ENCODE measurements at regions of chr1 and their contacts with region 1.

Region 1: DNA sequence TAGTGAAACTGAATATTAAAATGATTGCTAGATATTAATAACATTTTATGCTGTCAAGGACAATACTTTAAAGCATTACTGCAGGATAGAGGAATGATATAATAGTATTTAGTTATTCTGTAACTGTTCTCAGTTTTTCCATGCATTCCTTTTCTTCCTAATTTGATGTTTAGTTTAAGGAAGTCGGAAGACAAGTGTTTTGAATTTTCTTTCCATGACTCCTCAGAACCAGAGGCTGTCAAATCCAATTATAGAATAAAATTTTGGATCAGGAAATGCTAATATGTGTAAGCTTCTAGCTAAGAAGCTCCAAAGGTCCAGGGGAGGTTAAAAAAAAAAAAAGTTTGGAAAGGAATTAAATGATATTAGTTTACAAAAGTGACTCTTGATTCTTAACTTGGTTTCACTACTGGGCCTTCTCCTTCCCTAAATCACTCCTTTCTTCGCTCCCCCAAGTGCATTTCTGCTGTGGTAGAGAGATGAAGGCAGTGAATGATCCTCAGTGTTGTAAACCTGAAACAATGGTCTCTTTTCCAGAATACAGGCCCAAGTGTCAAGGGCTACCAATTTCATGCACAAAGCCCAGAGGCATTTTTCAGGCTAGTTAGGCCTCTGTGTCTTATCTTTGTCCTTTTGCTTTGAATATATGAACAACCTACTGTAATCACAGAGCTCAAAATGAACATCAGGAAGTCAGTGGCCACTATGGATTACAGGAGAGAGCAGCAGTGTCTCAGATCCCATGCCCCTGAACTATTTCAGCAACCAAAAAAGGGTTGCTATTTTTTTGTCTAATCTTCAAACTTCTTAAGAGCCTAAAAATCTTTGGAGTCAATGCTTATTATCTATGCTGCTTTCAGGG is 6.2 kb downstream of the ADSS2 start:
- DNase-seq: no peak
- H3K4me3 Mint-ChIP-seq: no peak overlapping the region
- H3K27ac Mint-ChIP-seq: peak overlapping the region; percentile 76
- H3K4me1 Mint-ChIP-seq: peaks cover 56% of the 10 kb centered on the region
- H3K27me3 Mint-ChIP-seq: no peaks in the 10 kb centered on the region
- CTCF ChIP-seq: no peak

Region 2: GRCh38 chr1:244302889-244303613 is 142.5 kb before region 1 on chr1:
- CTCF ChIA-PET with region 1: interaction called, 4 read pairs
- intact Hi-C with region 1: loop called (anchors 5 kb)
- DNase-seq: peak; percentile 79
- H3K4me3 Mint-ChIP-seq: peak overlapping the region; percentile 56
- H3K27ac Mint-ChIP-seq: peak overlapping the region; percentile 92
- H3K4me1 Mint-ChIP-seq: peaks cover 49% of the 10 kb centered on the region
- H3K27me3 Mint-ChIP-seq: no peaks in the 10 kb centered on the region
- CTCF ChIP-seq: no peak

Region 3: DNA sequence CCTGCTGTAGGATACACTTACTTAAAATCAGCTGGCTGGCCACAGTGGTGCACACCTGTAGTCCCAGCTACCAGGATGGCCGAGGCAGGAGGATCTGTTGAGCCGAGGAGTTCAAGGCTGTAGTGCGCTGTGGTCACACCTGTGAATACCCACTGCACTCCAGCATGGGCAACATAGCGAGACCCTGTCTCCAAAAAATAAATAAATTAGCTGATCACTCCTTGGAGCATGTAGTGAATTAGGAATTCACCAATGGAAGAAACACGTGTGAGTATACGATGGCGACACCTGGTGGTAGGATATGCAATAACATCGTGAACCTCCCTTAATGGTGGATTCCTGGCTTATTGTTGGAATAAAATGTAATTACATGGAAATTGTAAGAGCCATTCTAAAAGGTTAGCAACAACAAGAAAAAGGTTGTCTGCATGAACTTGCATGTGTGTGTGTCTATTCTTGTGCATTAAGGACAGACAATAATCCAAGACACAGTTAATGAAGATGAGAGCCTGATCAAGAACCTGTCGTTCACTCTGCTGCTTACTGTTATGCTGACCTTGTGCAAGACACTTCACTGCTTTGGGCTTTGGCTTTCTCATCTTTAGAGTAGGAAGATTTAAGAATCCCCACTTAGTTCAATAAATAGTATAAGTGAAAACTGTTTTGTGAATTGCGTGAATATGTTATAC is 351.3 kb after region 1 on chr1:
- CTCF ChIA-PET with region 1: no interaction called
- intact Hi-C with region 1: loop called (anchors 10 kb)
- DNase-seq: peak; percentile 79
- H3K4me3 Mint-ChIP-seq: no peak overlapping the region
- H3K27ac Mint-ChIP-seq: no peak overlapping the region
- H3K4me1 Mint-ChIP-seq: peaks cover 10% of the 10 kb centered on the region
- H3K27me3 Mint-ChIP-seq: no peaks in the 10 kb centered on the region
- CTCF ChIP-seq: peak; percentile 88